ENCODE measurements at regions of chr14 and their contacts with region 1.

Region 1: GRCh38 chr14:21014761-21015190 is 10.1 kb downstream of the NDRG2 start:
- DNase-seq: peak; percentile 65
- H3K4me3 ChIP-seq: no peak overlapping the region
- H3K27ac ChIP-seq: no peak overlapping the region
- H3K27me3 ChIP-seq: peaks cover 20% of the 10 kb centered on the region
- CTCF ChIP-seq: peak; percentile 96

Region 2: DNA sequence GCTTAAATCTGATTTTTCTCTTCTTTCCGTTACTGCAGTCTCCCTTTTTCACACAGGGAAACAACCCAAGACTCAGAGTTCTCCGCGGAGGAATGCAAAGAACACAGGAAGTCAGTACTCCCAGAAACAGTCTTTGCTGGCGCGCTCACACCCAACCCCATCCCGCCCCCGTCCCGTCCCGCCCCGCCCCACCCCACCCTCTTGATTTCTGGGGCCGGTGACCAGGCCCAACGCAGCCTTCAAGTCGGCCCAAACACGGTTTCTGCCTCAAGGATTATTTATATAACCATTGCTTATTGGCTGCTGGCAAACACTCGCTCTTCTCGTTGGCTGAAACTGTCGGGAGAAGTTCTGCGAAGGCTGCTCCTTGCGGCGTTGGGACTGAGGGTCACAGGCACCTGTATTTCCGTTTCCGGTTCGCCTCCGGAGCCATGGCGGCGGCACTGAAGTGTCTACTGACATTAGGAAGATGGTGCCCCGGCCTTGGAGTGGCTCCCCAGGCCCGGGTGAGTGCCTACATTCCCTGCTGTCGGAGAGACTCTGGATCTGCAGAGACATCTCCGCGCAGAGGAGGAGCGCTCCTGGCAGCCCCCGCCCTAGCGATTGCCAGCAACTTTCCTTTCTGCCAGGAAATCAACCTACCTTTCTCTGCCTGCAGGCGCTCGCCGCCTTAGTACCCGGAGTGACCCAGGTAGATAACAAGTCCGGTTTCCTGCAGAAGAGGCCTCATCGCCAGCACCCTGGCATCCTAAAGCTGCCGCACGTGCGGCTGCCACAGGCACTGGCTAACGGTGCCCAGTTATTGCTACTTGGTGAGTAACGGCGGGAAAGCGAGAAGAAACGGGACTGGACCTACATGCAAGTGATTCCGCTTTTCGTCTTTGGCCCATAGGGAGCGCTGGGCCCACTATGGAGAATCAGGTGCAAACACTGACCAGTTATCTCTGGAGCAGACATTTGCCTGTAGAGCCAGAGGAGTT is 24.9 kb before region 1 on chr14 and contains the start of gene METTL17:
- CTCF ChIA-PET with region 1: interaction called, 21 read pairs
- POLR2A ChIA-PET with region 1: no interaction called
- DNase-seq: peak; percentile 96
- H3K4me3 ChIP-seq: peak within 1 kb of the TSS; percentile 88
- H3K27ac ChIP-seq: peak within 1 kb of the TSS; percentile 52
- H3K27me3 ChIP-seq: no peaks in the 10 kb centered on the region
- CTCF ChIP-seq: peak; percentile 48
- polyA plus RNA-seq, gene METTL17: 55.3 and 62.7 TPM in 2 replicates

Region 3: DNA sequence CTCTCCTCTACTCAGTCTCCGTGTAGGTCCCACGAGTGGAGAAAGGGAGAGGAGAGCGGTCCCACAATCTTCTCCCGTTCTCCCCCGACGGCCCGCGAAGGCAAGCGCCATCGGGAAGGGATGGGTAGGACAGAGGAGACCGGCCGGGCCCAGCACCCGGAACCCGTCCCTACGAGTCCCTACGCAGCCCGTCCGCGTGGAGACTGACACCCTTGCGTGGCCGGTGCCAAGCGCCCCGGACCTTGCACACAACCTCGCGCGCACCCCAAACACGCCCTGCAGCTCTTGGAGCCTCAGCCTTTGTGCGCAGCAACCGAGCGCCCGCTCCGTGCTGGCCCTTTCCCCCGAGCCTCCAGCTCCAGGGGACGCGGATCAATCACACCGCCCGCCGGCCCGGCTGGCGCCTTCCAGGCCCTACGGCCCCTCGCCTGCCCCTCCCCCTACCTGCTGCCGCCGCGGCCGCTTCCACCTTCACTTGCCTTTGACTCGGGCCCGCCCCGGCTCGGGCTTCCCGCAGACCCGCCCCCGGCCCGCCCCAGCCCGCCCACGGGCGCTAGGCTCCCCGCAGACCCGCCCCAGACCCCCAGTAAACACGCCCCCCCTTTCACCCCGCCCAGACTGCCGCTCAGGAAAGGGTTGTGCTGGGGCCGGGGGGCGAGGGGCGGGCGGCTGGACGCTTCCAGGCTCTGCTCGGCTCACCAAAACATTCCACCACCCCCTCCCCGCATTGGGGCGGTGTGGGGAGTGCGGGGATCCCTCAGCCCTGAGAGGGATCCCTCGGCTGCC is 10.0 kb after region 1 on chr14 and contains the start of gene NDRG2:
- CTCF ChIA-PET with region 1: interaction called, 16 read pairs
- POLR2A ChIA-PET with region 1: no interaction called
- DNase-seq: no peak
- H3K4me3 ChIP-seq: peak within 1 kb of the TSS; percentile 50
- H3K27ac ChIP-seq: no peak within 1 kb of the TSS
- H3K27me3 ChIP-seq: peaks cover 75% of the 10 kb centered on the region
- CTCF ChIP-seq: no peak
- polyA plus RNA-seq, gene NDRG2: 0.66 and 1.0 TPM in 2 replicates

Region 4: DNA sequence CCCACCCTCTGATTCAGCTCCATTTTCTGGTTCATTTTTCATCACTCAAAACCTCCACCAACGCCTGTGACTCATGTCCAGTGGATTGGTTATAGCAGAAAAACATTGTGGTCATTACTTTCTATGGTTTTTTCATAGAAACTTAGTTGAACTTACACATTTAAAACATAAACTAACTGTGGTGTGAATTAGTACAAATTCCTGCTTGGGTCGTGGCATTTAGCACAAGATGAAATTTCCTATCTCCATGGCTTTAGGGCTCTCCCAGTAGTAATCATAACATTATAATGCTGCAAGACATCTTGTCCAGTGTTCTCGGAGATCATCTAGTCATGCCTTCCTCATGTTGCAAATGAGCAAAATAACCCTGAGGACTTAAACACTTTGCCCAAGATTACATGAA is 34.5 kb after region 1 on chr14:
- CTCF ChIA-PET with region 1: interaction called, 42 read pairs
- POLR2A ChIA-PET with region 1: no interaction called
- DNase-seq: no peak
- H3K4me3 ChIP-seq: no peak overlapping the region
- H3K27ac ChIP-seq: no peak overlapping the region
- H3K27me3 ChIP-seq: peaks cover 10% of the 10 kb centered on the region
- CTCF ChIP-seq: no peak

Region 5: DNA sequence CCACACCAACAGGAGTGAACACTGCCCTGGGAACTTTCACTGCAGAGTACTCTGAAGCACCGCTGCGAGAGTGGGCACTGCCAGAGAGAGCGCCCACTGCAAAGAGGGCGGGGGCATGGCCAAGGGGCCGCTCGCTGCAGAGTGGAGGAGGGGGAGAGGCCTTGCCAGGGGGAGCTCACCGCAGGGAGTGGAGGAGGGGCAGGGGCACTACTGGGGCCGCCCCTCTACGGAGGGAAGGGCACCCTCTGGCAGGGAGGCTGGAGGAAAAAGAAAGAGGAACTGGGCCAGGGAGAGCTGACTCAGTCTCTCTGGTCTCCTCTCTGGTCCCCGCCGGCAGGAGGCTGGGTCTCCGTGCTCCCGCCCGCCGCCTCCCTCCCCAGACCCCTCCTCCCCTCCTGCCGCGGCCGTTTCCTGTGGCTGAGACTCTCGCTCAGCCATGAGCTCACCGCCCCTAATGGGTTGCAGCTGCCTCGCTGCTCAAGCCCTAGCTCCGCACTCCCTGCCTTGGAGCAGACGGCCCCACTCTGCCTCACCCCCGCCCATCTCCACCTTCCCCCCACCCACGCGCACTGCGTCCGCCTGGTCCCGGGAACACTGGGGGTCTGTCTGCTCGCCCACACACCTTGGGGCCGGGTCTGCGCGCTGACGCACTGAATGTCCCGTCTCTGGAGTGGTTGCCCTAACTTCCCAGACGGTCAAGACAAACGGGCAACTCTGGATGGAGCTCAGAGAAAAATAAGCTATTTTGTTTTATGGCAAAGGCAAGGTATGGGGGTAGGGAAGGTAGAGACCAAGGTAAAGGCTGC is 56.7 kb after region 1 on chr14:
- CTCF ChIA-PET with region 1: interaction called, 76 read pairs
- POLR2A ChIA-PET with region 1: interaction called, 12 read pairs
- DNase-seq: peak; percentile 88
- H3K4me3 ChIP-seq: peak overlapping the region; percentile 82
- H3K27ac ChIP-seq: peak overlapping the region; percentile 95
- H3K27me3 ChIP-seq: no peaks in the 10 kb centered on the region
- CTCF ChIP-seq: no peak

Region 6: GRCh38 chr14:21103710-21104447 is 89.1 kb after region 1 on chr14:
- CTCF ChIA-PET with region 1: interaction called, 310 read pairs
- POLR2A ChIA-PET with region 1: interaction called, 12 read pairs
- DNase-seq: peak; percentile 90
- H3K4me3 ChIP-seq: peak overlapping the region; percentile 75
- H3K27ac ChIP-seq: peak overlapping the region; percentile 98
- H3K27me3 ChIP-seq: peaks cover 6% of the 10 kb centered on the region
- CTCF ChIP-seq: peak; percentile 84